Activated CD8-positive, alpha-beta T cell treated with anti-CD3 and anti-CD28 coated beads for 36 hours (primary cell): ENCODE measurements at regions of chr9 and their contacts with region 1.

Region 1: GRCh38 chr9:128191406-128192046 is at the start of gene CIZ1:
- DNase-seq: peak; percentile 76
- ATAC-seq: peak; percentile 81
- H3K4me3 Mint-ChIP-seq: peak within 1 kb of the TSS; percentile 97
- H3K27ac Mint-ChIP-seq: peak within 1 kb of the TSS; percentile 93
- H3K4me1 Mint-ChIP-seq: peaks cover 38% of the 10 kb centered on the region
- H3K27me3 Mint-ChIP-seq: no peaks in the 10 kb centered on the region
- CTCF ChIP-seq: peak; percentile 86
- total RNA-seq, gene CIZ1: 75.7 to 77.1 TPM

Region 2: DNA sequence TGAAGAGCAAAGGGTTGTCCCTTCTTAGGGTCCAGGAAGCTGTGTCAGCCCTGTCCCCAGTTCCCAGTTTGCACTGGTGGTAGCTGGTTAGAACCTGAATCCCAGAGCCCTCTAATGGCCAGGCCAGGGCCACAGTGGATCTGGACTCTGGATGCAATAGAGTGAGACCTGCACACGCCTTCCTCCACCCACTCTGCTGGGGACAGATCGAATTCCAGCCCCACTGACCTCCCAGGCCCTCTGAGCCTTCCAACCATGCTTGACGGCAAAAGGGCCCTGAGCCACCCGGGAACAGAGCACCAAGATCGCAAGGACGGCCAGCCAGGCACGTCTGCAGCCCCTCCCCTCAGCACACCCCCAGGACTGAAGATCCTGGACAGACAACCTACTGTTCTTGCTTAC is 148.1 kb before region 1 on chr9:
- CTCF ChIA-PET with region 1: no interaction called
- POLR2A ChIA-PET with region 1: no interaction called
- intact Hi-C with region 1: no loop called
- DNase-seq: no peak
- ATAC-seq: no peak
- H3K4me3 Mint-ChIP-seq: no peak overlapping the region
- H3K27ac Mint-ChIP-seq: no peak overlapping the region
- H3K4me1 Mint-ChIP-seq: peaks cover 7% of the 10 kb centered on the region
- H3K27me3 Mint-ChIP-seq: no peaks in the 10 kb centered on the region
- CTCF ChIP-seq: no peak

Region 3: DNA sequence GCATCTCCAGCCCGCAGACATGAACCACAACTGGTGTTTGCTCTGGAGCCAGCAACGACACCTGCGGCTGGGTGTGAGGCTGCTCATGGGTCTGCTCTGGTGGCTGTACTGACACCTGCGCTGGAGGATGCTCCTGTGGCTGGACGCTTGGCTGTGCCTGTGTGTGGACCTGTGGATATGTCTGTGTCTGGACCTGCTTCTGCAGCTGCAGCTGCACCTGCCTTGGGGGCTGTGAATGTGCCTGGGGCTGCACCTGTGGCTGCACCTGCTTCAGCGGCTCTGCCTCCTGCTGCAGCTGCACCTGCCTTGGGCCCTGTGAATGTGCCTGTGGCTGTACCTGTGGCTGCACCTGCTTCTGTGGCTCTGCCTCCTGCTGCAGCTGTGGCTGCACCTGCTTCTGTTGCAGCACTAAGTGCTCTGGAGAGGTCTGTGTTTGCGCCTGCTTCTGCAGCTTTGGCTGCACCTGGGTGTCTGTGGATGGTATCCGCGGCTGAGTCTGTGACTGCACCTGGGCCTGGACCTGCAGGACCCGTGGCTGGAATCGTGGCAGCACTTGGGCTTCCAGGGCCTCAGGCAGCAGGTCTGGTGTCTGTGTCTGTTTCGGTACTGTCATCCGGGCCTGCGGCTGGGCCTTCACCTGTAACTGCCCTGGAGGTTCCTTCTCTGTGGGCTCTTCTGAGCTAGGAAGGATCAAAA is 12.6 kb before region 1 on chr9:
- CTCF ChIA-PET with region 1: interaction called, 3 read pairs
- POLR2A ChIA-PET with region 1: interaction called, 13 read pairs
- intact Hi-C with region 1: no loop called
- DNase-seq: no peak
- ATAC-seq: no peak
- H3K4me3 Mint-ChIP-seq: no peak overlapping the region
- H3K27ac Mint-ChIP-seq: no peak overlapping the region
- H3K4me1 Mint-ChIP-seq: peaks cover 2% of the 10 kb centered on the region
- H3K27me3 Mint-ChIP-seq: no peaks in the 10 kb centered on the region
- CTCF ChIP-seq: no peak

Region 4: GRCh38 chr9:128225770-128226407 is 34.4 kb after region 1 on chr9:
- CTCF ChIA-PET with region 1: no interaction called
- POLR2A ChIA-PET with region 1: no interaction called
- intact Hi-C with region 1: no loop called
- DNase-seq: no peak
- ATAC-seq: no peak
- H3K4me3 Mint-ChIP-seq: no peak overlapping the region
- H3K27ac Mint-ChIP-seq: no peak overlapping the region
- H3K4me1 Mint-ChIP-seq: no peaks in the 10 kb centered on the region
- H3K27me3 Mint-ChIP-seq: no peaks in the 10 kb centered on the region
- CTCF ChIP-seq: no peak